ENCODE measurements at regions of chr6 and their contacts with region 1.

Region 1: DNA sequence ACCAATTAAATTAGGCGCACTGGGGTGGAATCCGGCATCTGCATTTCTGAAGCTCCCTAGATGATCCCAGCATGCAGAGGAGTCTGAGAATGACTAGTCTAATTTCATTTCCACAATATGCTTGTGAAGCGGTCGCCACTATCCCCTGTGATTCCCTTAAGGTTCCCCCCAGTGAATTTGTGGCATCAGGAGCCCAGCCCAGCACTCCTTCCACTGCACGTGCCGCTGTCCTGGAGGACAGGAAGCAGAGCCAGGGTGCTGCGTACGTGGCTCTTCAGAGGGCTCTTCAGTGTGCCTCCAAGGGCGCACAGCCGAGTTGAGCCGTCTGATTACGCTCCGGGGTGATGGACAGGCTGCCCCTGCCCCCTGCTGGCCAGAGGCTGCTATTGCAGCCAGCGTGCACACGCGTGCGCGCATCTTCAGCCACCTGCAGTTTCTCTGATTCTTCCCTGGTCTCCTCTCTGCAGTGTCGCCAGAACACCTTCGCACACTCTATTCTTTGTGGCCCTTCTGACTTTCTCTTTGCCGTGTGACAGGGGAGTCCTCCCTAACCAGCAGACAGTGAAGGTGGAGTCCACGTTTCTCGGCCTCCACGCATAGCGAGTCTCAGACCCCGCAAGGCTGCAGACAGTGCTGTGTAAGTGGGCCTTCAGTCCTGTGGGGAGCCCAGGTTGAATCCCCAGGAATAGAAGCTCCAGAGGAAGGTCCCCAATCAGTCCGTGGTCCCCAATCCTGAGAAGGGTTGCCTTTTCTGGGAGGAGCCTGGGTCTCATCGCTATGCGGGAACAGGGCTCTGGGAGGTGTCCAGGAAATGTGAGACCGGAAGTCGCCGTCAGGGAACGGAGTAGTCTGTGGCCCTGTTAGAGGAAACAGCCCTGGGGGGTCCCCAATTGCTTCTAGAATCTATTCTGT is 16.5 kb upstream of the NCR2 start:
- DNase-seq: peak; percentile 92
- H3K4me3 ChIP-seq: peak overlapping the region; percentile 30
- H3K27ac ChIP-seq: no peak overlapping the region
- H3K4me1 ChIP-seq: peaks cover 9% of the 10 kb centered on the region
- H3K27me3 ChIP-seq: peaks cover 32% of the 10 kb centered on the region
- CTCF ChIP-seq: peak; percentile 100

Region 2: DNA sequence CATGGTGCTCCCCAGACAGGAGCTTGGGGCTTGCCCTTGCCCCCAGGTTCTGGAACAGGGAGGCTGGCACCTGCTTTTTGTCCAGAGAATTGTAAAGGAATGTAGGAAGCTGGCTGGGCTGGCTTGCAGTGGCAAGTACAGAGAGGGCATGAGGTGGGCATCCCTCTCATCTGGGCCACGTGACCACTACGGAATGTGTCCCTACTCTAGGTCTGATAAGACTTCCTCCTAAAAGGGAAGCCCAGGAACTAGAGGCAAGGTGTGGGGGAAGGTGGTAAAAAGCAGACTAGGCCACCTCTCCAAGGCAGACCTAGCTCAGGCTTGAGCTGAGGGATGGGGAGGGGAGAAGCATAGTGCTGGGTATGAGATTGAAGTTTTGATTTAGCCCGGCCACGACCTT is 318.7 kb before region 1 on chr6:
- CTCF ChIA-PET with region 1: no interaction called
- POLR2A ChIA-PET with region 1: no interaction called
- intact Hi-C with region 1: loop called (anchors 10 kb)
- DNase-seq: no peak
- H3K4me3 ChIP-seq: no peak overlapping the region
- H3K27ac ChIP-seq: no peak overlapping the region
- H3K4me1 ChIP-seq: peaks cover 13% of the 10 kb centered on the region
- H3K27me3 ChIP-seq: peaks cover 9% of the 10 kb centered on the region
- CTCF ChIP-seq: no peak

Region 3: DNA sequence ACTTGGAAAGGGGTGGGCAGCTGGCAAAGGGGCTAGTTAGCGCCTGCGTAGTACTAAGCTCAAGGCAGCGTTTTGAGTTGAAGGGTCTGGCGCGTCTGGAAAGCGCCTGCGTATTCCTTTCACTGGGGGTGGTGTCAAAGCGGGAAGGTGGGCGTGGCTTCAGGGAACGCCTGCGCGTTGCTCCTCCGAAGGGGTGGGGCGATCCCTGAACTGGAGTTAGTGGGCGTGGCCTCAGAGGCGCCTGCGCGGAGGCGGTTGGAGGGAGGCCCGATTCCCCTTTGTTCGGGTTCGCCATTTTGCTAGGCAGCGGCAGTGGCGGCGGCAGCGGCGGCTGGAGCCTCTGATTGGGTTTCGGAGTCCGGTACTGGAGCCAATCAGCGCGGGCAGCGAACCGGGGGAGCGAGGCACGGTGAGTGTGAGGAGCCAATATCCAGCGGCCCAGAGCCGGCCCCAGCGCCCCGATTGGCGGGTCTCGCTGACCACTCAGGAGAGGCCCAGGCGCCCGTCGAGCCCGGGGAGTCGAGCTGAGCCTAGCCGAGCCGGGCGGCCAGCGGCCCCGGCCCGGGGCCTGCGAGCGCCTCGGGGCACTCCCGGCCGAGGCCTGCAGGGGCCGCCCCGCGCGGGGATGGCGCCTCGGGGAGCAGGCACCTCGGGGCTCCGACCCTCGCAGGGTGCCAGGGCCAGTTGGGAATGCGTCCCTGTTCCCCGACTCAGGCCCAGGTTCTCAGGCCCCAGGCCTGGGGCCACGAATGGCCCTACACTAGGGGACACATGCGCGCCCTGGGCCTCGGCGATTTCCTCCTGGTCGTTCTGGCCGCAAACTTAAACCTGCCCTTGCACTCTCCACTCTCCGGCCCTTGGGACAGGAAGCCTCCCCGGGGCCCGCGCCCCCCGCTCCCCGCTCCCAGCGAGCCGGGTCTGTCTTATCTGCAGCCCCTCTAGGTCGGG is 246.0 kb before region 1 on chr6 and contains the start of gene NFYA:
- CTCF ChIA-PET with region 1: interaction called, 4 read pairs
- POLR2A ChIA-PET with region 1: no interaction called
- intact Hi-C with region 1: loop called (anchors 5 kb)
- DNase-seq: peak; percentile 99
- H3K4me3 ChIP-seq: peak within 1 kb of the TSS; percentile 91
- H3K27ac ChIP-seq: peak within 1 kb of the TSS; percentile 100
- H3K4me1 ChIP-seq: peaks cover 28% of the 10 kb centered on the region
- H3K27me3 ChIP-seq: no peaks in the 10 kb centered on the region
- CTCF ChIP-seq: no peak; the same call in 1 of the 2 replicates
- total RNA-seq, gene NFYA: 38.8 and 45.4 TPM in 2 replicates

Region 4: DNA sequence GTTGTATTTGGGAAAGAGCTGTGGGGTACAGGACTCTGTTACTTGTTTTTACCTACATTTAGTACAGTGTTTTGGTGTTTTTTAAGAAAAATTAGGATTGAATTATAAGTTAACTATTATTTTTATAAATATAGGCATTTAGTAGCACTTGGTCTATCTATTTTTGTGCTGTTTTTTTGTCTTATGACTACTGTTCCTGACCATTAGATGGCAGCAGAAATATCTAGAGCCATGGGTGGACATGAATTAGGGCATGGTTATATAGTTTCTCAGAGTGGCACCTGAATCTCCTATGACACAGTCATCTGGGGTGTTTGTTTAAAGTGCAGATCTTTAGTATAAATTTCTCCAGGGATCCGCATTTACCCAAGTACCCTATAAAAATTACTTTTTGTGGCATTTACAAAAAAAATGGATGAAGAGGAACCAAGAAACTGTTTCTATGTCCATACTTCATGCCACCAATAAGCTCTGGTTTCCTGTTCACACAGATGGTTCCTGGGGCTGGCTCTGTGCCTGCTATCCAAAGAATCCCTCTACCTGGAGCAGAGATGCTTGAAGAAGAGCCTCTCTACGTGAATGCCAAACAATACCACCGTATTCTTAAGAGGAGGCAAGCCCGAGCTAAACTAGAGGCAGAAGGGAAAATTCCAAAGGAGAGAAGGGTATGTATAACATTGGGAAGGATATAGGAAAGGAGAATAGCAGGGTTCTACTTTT is 226.3 kb before region 1 on chr6:
- CTCF ChIA-PET with region 1: no interaction called
- POLR2A ChIA-PET with region 1: no interaction called
- intact Hi-C with region 1: loop called (anchors 2 kb)
- DNase-seq: peak; percentile 37
- H3K4me3 ChIP-seq: no peak overlapping the region
- H3K27ac ChIP-seq: no peak overlapping the region
- H3K4me1 ChIP-seq: no peaks in the 10 kb centered on the region
- H3K27me3 ChIP-seq: no peaks in the 10 kb centered on the region
- CTCF ChIP-seq: peak; percentile 54; the same call in 1 of the 2 replicates

Region 5: GRCh38 chr6:41191569-41191968 is 127.3 kb before region 1 on chr6:
- CTCF ChIA-PET with region 1: no interaction called
- POLR2A ChIA-PET with region 1: no interaction called
- intact Hi-C with region 1: loop called (anchors 10 kb)
- DNase-seq: peak; percentile 38
- H3K4me3 ChIP-seq: no peak overlapping the region
- H3K27ac ChIP-seq: no peak overlapping the region
- H3K4me1 ChIP-seq: no peaks in the 10 kb centered on the region
- H3K27me3 ChIP-seq: peaks cover 23% of the 10 kb centered on the region
- CTCF ChIP-seq: peak; percentile 61; the same call in 1 of the 2 replicates

Region 6: GRCh38 chr6:41228616-41229015 is 90.3 kb before region 1 on chr6:
- CTCF ChIA-PET with region 1: no interaction called
- POLR2A ChIA-PET with region 1: no interaction called
- intact Hi-C with region 1: loop called (anchors 1 kb)
- DNase-seq: peak; percentile 56
- H3K4me3 ChIP-seq: no peak overlapping the region
- H3K27ac ChIP-seq: no peak overlapping the region
- H3K4me1 ChIP-seq: no peaks in the 10 kb centered on the region
- H3K27me3 ChIP-seq: no peaks in the 10 kb centered on the region
- CTCF ChIP-seq: peak; percentile 56

Region 7: GRCh38 chr6:41278699-41279405 is 40.1 kb before region 1 on chr6:
- CTCF ChIA-PET with region 1: no interaction called
- POLR2A ChIA-PET with region 1: no interaction called
- intact Hi-C with region 1: no loop called
- DNase-seq: peak; percentile 82
- H3K4me3 ChIP-seq: no peak overlapping the region
- H3K27ac ChIP-seq: no peak overlapping the region
- H3K4me1 ChIP-seq: no peaks in the 10 kb centered on the region
- H3K27me3 ChIP-seq: no peaks in the 10 kb centered on the region
- CTCF ChIP-seq: peak; percentile 69